ENCODE measurements at regions of chr10 and their contacts with region 1.

Region 1: DNA sequence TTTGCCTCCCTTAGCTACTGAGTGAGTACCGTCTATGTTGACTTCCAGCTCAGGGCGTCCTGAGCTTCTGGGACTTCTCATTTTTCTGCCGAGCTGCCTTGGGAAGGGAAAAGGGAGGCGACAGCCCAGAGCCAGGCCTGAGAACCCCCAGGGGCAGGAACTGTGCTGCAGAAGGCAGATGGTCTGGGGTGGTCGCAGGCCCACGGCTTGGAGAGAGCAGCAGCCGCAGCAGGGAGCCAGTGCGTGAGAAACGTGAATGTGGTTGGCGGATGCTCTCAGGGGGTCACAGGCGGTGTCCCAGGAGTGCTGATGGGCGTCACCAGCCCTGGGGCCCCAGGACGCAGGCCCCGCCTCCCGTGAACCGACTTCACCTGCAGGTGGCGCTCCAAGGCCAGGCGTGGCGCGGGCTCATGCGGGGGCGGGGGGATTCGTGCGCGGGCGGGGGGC is 9.2 kb upstream of the PWWP2B start:
- DNase-seq: peak; percentile 66 to 91 (median 90)
- ATAC-seq: peak; percentile 51 to 72
- H3K4me3 ChIP-seq: no peak overlapping the region
- H3K27ac ChIP-seq: no peak overlapping the region
- H3K4me1 ChIP-seq: no peaks in the 10 kb centered on the region
- H3K27me3 ChIP-seq: no peaks in the 10 kb centered on the region

Region 2: DNA sequence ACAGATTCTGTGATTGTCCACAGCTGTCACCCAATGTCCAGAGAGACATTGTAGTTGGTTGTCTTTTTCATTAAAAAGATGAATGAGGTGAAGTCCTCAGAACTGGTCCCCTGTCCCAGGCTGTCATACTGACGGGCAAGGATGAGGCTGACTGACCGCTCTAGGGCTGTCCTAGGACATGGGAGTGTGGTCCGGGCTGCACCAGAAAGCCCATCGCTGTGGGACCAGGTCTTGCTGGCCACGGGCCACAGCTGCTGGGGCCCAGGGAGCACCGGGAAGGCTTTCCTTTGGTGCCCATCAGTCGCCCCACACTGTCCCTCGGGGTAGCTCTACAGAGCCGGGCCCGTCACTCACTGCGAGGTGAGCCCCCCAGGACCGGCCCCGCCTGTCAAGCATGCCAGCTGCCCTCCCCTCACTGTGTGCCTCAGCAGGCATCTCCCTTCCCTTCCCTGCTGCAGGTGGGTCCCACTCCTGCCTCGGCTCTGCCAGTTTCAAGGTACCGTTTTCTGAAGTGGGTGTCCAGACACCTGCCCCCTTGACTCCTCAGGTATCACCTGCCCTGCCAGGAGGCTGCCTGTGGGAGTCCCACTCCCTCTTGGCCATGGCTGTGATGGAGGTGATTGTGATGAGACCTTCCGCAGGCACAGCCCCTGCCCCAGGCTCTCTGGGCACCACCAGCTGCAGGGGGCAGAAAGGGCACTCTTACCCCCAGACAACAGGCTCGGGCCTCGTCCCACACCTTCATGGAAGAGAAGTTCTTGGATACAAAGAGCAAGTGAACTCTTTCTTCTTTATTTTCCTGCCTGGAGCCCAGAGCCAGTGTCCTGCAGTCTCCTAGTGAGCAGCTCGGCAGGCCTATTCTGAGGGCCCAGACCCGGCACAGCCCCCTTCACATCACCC is 34.1 kb before region 1 on chr10:
- intact Hi-C with region 1: no loop called
- DNase-seq: peak in 1 of 3 donors; percentile 58
- ATAC-seq: peak in 1 of 2 donors; percentile 18
- H3K4me3 ChIP-seq: no peak overlapping the region
- H3K27ac ChIP-seq: no peak overlapping the region
- H3K4me1 ChIP-seq: no peaks in the 10 kb centered on the region
- H3K27me3 ChIP-seq: no peaks in the 10 kb centered on the region

Region 3: DNA sequence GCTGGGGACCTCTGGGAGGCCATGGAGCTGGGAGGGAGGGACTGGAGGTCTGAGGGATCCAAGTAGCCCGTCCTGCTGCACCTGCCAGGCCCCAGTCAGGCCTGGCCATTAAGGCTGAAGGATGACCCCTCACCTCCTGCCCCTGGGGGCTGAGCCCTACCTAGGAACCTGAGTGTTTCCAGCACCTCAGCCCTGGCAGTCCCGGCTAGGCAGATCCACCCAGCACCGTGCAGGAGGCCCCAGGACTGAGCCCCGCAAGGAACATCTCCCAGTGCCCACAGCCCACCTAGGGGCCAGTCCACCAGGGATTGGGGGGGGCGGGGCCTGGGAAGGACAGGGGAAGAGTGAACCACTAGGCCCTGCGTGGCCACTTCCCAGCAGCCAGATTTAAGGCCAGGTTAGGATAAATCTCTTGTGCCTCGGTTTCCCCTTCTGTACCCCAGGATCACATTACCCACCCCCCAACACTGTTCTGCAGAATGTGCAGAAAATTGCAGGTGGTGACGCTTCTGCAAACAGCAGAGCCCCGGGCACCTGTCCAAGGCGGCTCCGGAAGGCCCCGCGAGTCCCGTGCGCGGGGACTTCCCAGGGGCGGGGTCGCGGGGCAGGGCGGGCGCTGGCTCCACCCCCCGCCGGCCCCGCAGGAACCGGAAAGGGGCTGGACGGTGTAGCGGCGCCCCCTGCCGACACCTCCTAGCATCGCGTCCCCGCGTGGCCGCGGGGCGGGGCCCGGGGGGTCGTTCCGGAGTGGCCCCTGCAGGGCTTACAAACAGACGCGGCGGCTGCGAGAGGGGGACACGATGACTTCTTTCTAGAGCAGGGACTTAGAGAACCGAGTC is 65.1 kb after region 1 on chr10:
- intact Hi-C with region 1: loop called (anchors 2 to 5 kb)
- DNase-seq: peak; percentile 83 to 94 (median 94)
- ATAC-seq: peak; percentile 77 to 79
- H3K4me3 ChIP-seq: no peak overlapping the region
- H3K27ac ChIP-seq: no peak overlapping the region
- H3K4me1 ChIP-seq: no peaks in the 10 kb centered on the region
- H3K27me3 ChIP-seq: no peaks in the 10 kb centered on the region

Region 4: GRCh38 chr10:132458593-132459300 is 71.0 kb after region 1 on chr10:
- intact Hi-C with region 1: loop called (anchors 2 to 5 kb)
- DNase-seq: peak; percentile 50 to 87 (median 86)
- ATAC-seq: peak; percentile 46 to 66
- H3K4me3 ChIP-seq: no peak overlapping the region
- H3K27ac ChIP-seq: no peak overlapping the region
- H3K4me1 ChIP-seq: peaks cover 4% of the 10 kb centered on the region
- H3K27me3 ChIP-seq: no peaks in the 10 kb centered on the region

Region 5: GRCh38 chr10:132643709-132644526 is 256.1 kb after region 1 on chr10:
- intact Hi-C with region 1: loop called in 2 of 4 experiments (anchors 10 kb)
- DNase-seq: peak in 1 of 3 donors; percentile 48
- ATAC-seq: peak in 1 of 2 donors; percentile 35
- H3K4me3 ChIP-seq: no peak overlapping the region
- H3K27ac ChIP-seq: no peak overlapping the region
- H3K4me1 ChIP-seq: no peaks in the 10 kb centered on the region
- H3K27me3 ChIP-seq: no peaks in the 10 kb centered on the region